Caco-2 (cell line): ENCODE measurements at regions of chr6 and their contacts with region 1.

Region 1: GRCh38 chr6:31068669-31069340 is 43.6 kb downstream of the C6orf15 start:
- DNase-seq: peak; percentile 61 to 78
- H3K4me3 ChIP-seq: no peak overlapping the region
- H3K4me3 Mint-ChIP-seq: no peak overlapping the region
- H3K27ac Mint-ChIP-seq: no peak overlapping the region
- H3K4me1 ChIP-seq: no peaks in the 10 kb centered on the region
- H3K4me1 Mint-ChIP-seq: no peaks in the 10 kb centered on the region
- H3K27me3 ChIP-seq: no peaks in the 10 kb centered on the region
- H3K27me3 Mint-ChIP-seq: no peaks in the 10 kb centered on the region
- CTCF ChIP-seq: peak; percentile 68 to 84

Region 2: GRCh38 chr6:30828027-30828960 is 240.5 kb before region 1 on chr6:
- CTCF ChIA-PET with region 1: interaction called, 6 read pairs
- POLR2A ChIA-PET with region 1: no interaction called
- intact Hi-C with region 1: loop called (anchors 1 kb)
- DNase-seq: peak; percentile 83 to 91
- H3K4me3 ChIP-seq: no peak overlapping the region
- H3K4me3 Mint-ChIP-seq: no peak overlapping the region
- H3K27ac Mint-ChIP-seq: peak overlapping the region; percentile 43
- H3K4me1 ChIP-seq: peaks cover 16% of the 10 kb centered on the region
- H3K4me1 Mint-ChIP-seq: peaks cover 27% of the 10 kb centered on the region
- H3K27me3 ChIP-seq: no peaks in the 10 kb centered on the region
- H3K27me3 Mint-ChIP-seq: no peaks in the 10 kb centered on the region
- CTCF ChIP-seq: peak; percentile 85 to 89

Region 3: DNA sequence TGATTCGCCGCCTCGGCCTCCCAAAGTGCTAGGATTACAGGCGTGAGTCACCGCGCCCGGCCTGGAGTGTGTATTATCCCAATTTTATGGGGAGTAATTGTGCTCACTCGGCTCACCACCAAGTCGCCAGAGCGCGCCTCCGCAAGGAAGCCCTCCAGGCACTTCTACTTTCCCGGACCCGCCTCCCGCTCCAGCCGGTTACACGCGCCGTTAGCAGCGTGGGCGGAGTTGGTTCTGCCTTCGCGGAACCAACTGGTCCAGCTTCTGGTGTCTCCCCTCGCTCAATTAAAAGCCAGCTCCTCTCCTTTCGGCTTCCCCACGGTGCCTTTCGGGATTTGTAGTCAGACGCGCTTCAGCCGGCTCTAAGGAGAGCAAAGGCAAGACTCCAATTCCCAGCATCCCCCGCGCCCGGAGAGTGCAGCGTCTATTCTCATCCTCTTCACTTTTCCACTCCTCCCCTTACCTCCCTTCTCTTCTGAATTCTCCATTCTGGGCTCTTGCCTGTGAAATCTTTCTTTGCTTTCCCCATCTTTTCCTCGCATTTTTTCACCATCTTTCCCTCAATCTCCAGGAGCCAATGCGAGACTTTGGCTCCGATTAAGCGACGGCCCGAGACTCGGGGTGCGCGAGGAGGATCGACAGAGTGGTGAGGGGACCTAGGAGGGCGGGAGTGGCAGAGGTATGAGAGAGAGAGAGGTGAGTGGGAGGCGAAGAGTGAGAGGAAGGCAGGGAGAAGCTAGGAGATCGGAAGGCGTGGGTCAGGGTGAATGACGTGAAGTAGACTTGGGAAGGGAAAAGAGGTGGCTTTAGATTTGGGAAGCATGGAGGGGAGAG is 160.8 kb before region 1 on chr6 and contains the start of gene GTF2H4:
- CTCF ChIA-PET with region 1: interaction called, 39 read pairs
- POLR2A ChIA-PET with region 1: no interaction called
- intact Hi-C with region 1: no loop called
- DNase-seq: peak; percentile 95 to 98
- H3K4me3 ChIP-seq: peak within 1 kb of the TSS; percentile 76
- H3K4me3 Mint-ChIP-seq: peak within 1 kb of the TSS; percentile 90
- H3K27ac Mint-ChIP-seq: peak within 1 kb of the TSS; percentile 60
- H3K4me1 ChIP-seq: peaks cover 9% of the 10 kb centered on the region; the same call in 1 of the 2 replicates
- H3K4me1 Mint-ChIP-seq: peaks cover 9% of the 10 kb centered on the region
- H3K27me3 ChIP-seq: no peaks in the 10 kb centered on the region
- H3K27me3 Mint-ChIP-seq: no peaks in the 10 kb centered on the region
- CTCF ChIP-seq: no peak
- total RNA-seq, gene GTF2H4: 40.6 and 43.6 TPM in 2 replicates

Region 4: GRCh38 chr6:30942338-30943060 is 126.3 kb before region 1 on chr6:
- CTCF ChIA-PET with region 1: interaction called, 24 read pairs
- POLR2A ChIA-PET with region 1: no interaction called
- intact Hi-C with region 1: no loop called
- DNase-seq: peak; percentile 91 to 94
- H3K4me3 ChIP-seq: no peak overlapping the region
- H3K4me3 Mint-ChIP-seq: peak overlapping the region; percentile 55
- H3K27ac Mint-ChIP-seq: peak overlapping the region; percentile 80
- H3K4me1 ChIP-seq: peaks cover 23% of the 10 kb centered on the region
- H3K4me1 Mint-ChIP-seq: peaks cover 23% of the 10 kb centered on the region
- H3K27me3 ChIP-seq: no peaks in the 10 kb centered on the region
- H3K27me3 Mint-ChIP-seq: no peaks in the 10 kb centered on the region
- CTCF ChIP-seq: peak; percentile 52 to 67

Region 5: GRCh38 chr6:31042806-31043205 is 26.0 kb before region 1 on chr6:
- CTCF ChIA-PET with region 1: interaction called, 22 read pairs
- POLR2A ChIA-PET with region 1: no interaction called
- intact Hi-C with region 1: no loop called
- DNase-seq: peak; percentile 57 to 66
- H3K4me3 ChIP-seq: no peak overlapping the region
- H3K4me3 Mint-ChIP-seq: no peak overlapping the region
- H3K27ac Mint-ChIP-seq: no peak overlapping the region
- H3K4me1 ChIP-seq: peaks cover 6% of the 10 kb centered on the region; the same call in 1 of the 2 replicates
- H3K4me1 Mint-ChIP-seq: no peaks in the 10 kb centered on the region
- H3K27me3 ChIP-seq: no peaks in the 10 kb centered on the region
- H3K27me3 Mint-ChIP-seq: no peaks in the 10 kb centered on the region
- CTCF ChIP-seq: peak; percentile 52 to 68

Region 6: DNA sequence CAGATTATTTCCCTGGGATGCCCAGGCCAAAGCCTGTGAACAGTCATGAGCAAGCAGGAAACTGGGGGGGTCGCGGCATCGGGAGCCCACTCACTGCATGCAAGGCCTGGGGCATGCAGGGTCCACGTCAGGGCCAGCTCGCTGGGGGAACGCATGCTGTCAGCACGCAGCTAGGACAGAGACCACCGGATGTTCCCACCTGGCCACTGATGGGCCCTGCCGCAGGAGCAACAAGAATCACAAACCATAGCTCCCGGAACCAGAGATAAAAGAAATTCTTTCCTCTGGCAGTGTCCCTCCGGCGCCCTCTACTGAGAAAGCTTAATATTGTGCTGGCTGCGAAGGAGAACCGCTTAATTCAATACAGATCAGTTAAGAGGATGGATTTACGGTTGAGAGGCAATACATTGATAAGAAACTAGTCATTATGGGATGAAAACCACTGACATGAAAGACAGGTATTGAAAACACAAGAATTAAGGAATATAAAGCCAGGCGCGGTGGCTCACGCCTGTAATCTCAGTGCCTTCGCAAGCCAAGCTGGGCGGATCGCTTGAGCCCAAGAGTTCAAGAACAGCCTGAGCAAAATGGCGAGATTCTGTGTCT is 11.0 kb after region 1 on chr6:
- CTCF ChIA-PET with region 1: interaction called, 40 read pairs
- POLR2A ChIA-PET with region 1: no interaction called
- intact Hi-C with region 1: no loop called
- DNase-seq: peak; percentile 71 to 78
- H3K4me3 ChIP-seq: no peak overlapping the region
- H3K4me3 Mint-ChIP-seq: no peak overlapping the region
- H3K27ac Mint-ChIP-seq: no peak overlapping the region
- H3K4me1 ChIP-seq: 0 out of 2 replicates have a peak, but pooled peaks cover 5% of the 10 kb centered on the region
- H3K4me1 Mint-ChIP-seq: peaks cover 8% of the 10 kb centered on the region
- H3K27me3 ChIP-seq: no peaks in the 10 kb centered on the region
- H3K27me3 Mint-ChIP-seq: peaks cover 5% of the 10 kb centered on the region
- CTCF ChIP-seq: peak; percentile 63 to 82

Region 7: DNA sequence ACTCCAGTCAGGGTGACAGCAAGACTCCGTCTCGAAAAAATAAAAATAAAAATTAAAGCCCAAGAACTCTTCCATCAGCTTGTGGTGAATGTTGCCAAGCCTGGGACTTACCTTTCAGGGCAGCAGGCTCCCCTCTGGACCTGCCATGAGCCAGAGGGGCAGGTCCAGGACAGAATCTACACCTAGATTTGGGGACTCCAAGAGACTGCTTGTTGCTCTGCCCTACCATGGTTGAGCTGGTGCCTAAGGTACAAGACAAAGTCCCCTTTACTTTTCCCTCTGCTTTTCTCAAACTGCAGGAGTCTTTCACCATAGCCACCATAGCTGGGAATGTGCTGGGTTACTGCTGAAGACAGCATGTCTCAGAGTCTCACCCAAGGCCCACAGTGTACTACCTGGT is 34.3 kb after region 1 on chr6:
- CTCF ChIA-PET with region 1: no interaction called
- POLR2A ChIA-PET with region 1: no interaction called
- intact Hi-C with region 1: no loop called
- DNase-seq: no peak
- H3K4me3 ChIP-seq: no peak overlapping the region
- H3K4me3 Mint-ChIP-seq: no peak overlapping the region
- H3K27ac Mint-ChIP-seq: no peak overlapping the region
- H3K4me1 ChIP-seq: no peaks in the 10 kb centered on the region
- H3K4me1 Mint-ChIP-seq: no peaks in the 10 kb centered on the region
- H3K27me3 ChIP-seq: no peaks in the 10 kb centered on the region
- H3K27me3 Mint-ChIP-seq: no peaks in the 10 kb centered on the region
- CTCF ChIP-seq: no peak

Region 8: DNA sequence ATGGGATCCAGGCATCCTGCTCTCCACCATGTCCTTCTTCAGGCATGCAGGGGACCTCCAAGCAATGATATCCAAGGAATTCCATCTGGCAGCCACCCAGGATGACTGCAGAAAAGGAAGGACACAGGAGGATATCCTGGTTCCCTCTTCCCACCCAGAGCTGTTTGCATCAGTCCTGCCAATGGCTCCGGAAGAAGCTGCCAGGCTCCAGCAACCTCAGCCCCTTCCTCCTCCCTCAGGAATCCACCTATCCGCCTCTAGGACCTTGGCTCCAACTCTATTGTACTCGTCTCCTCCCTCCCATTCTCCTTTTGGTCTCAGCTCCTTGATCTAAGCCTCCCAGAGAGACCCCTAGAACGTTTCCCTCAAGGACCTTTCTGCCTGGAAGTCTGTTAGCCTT is 70.8 kb after region 1 on chr6:
- CTCF ChIA-PET with region 1: interaction called, 10 read pairs
- POLR2A ChIA-PET with region 1: no interaction called
- intact Hi-C with region 1: no loop called
- DNase-seq: no peak
- H3K4me3 ChIP-seq: no peak overlapping the region
- H3K4me3 Mint-ChIP-seq: no peak overlapping the region
- H3K27ac Mint-ChIP-seq: no peak overlapping the region
- H3K4me1 ChIP-seq: 0 out of 2 replicates have a peak, but pooled peaks cover 3% of the 10 kb centered on the region
- H3K4me1 Mint-ChIP-seq: peaks cover 13% of the 10 kb centered on the region
- H3K27me3 ChIP-seq: no peaks in the 10 kb centered on the region
- H3K27me3 Mint-ChIP-seq: no peaks in the 10 kb centered on the region
- CTCF ChIP-seq: no peak